H1 (cell line): ENCODE measurements at regions of chrX and their contacts with region 1.

Region 1: DNA sequence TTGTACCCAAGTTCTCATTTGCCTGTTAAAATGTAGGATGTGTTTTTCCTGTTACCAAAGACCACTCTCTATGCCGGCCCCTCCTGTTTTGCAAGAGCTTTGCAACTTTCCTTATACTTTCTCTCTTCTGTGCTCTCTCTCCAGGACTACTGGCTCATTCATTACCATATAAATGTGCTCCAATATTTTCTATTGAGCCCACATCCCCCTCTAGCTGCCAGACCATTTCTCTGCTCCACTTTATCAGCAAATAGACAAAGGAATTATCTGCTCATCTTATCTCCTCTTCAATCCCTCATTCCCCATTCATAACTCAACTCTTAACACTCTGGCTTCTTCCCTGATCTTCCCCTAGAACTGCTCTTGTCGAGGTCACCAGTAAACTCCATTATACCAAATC is 33.6 kb downstream of the RPGR start:
- DNase-seq: no peak
- H3K4me3 ChIP-seq: no peak overlapping the region
- H3K27ac ChIP-seq: no peak overlapping the region
- H3K4me1 ChIP-seq: no peaks in the 10 kb centered on the region; a peak in 1 of 7 replicates
- H3K27me3 ChIP-seq: no peaks in the 10 kb centered on the region
- CTCF ChIP-seq: no peak
- EP300 ChIP-seq: no peak
- POLR2A ChIP-seq: no peak
- RAD21 ChIP-seq: no peak

Region 2: GRCh38 chrX:38138900-38139299 is 154.8 kb before region 1 on chrX:
- CTCF ChIA-PET with region 1: no interaction called
- POLR2A ChIA-PET with region 1: no interaction called
- DNase-seq: no peak
- H3K4me3 ChIP-seq: no peak overlapping the region
- H3K27ac ChIP-seq: no peak overlapping the region
- H3K4me1 ChIP-seq: no peaks in the 10 kb centered on the region
- H3K27me3 ChIP-seq: no peaks in the 10 kb centered on the region
- CTCF ChIP-seq: no peak
- EP300 ChIP-seq: no peak
- POLR2A ChIP-seq: no peak
- RAD21 ChIP-seq: no peak

Region 3: DNA sequence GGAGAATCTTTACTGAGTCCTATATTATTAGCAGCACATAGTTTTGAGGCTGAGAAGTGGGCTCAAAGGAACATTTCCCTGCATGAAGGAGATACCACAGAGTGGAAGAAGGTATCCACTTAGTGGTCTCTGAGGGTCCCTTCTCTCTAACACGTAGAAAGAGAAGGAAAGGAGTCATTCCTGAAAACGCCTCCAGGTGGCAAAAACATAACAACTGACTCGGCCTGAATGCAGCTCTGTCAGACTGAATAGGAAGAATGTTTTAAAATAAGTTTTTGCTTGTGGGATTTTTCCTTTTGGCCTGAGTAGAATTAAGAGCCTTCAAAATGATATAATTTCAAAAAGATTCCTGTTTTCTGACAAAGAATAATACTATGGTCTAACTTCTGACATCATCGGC is 10.3 kb after region 1 on chrX:
- CTCF ChIA-PET with region 1: interaction called, 11 read pairs
- POLR2A ChIA-PET with region 1: no interaction called
- DNase-seq: no peak
- H3K4me3 ChIP-seq: no peak overlapping the region
- H3K27ac ChIP-seq: no peak overlapping the region
- H3K4me1 ChIP-seq: no peaks in the 10 kb centered on the region
- H3K27me3 ChIP-seq: no peaks in the 10 kb centered on the region
- CTCF ChIP-seq: peak in 2 of 3 experiments; percentile 22 to 29; a peak in 2 of 4 replicates
- EP300 ChIP-seq: no peak
- POLR2A ChIP-seq: no peak
- RAD21 ChIP-seq: peak in 1 of 2 experiments; percentile 26; a peak in 1 of 4 replicates

Region 4: GRCh38 chrX:38409289-38409688 is 115.5 kb after region 1 on chrX:
- CTCF ChIA-PET with region 1: no interaction called
- POLR2A ChIA-PET with region 1: no interaction called
- DNase-seq: no peak
- H3K4me3 ChIP-seq: no peak overlapping the region
- H3K27ac ChIP-seq: no peak overlapping the region
- H3K4me1 ChIP-seq: no peaks in the 10 kb centered on the region
- H3K27me3 ChIP-seq: no peaks in the 10 kb centered on the region
- CTCF ChIP-seq: no peak
- EP300 ChIP-seq: no peak
- POLR2A ChIP-seq: no peak
- RAD21 ChIP-seq: no peak